Activated CD8-positive, alpha-beta T cell treated with anti-CD3 and anti-CD28 coated beads, Interleukin-2, amount 10 ng/mL, durations not matched to agents 7 days and 5 days (primary cell): ENCODE measurements at regions of chr2 and their contacts with region 1.

Region 1: GRCh38 chr2:10141736-10142642 is 19.4 kb downstream of the RRM2 start:
- DNase-seq: peak; percentile 75
- ATAC-seq: peak; percentile 59
- H3K4me3 Mint-ChIP-seq: peak overlapping the region; percentile 39
- H3K27ac Mint-ChIP-seq: peak overlapping the region; percentile 89
- H3K4me1 Mint-ChIP-seq: peaks cover 40% of the 10 kb centered on the region
- H3K27me3 Mint-ChIP-seq: no peaks in the 10 kb centered on the region

Region 2: DNA sequence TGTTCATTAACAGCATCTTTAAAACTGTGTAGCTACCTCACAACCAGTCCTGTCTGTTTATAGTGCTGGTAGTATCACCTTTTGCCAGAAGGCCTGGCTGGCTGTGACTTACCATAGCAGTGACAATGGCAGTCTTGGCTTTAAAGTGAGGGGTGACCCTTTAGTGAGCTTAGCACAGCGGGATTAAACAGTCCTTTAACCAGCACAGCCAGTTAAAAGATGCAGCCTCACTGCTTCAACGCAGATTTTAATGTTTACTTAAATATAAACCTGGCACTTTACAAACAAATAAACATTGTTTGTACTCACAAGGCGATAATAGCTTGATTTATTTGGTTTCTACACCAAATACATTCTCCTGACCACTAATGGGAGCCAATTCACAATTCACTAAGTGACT is 12.5 kb before region 1 on chr2:
- CTCF ChIA-PET with region 1: interaction called, 12 read pairs
- POLR2A ChIA-PET with region 1: interaction called, 11 read pairs
- DNase-seq: no peak
- ATAC-seq: no peak
- H3K4me3 Mint-ChIP-seq: peak overlapping the region; percentile 66
- H3K27ac Mint-ChIP-seq: no peak overlapping the region
- H3K4me1 Mint-ChIP-seq: peaks cover 73% of the 10 kb centered on the region
- H3K27me3 Mint-ChIP-seq: no peaks in the 10 kb centered on the region